Activated CD4-positive, alpha-beta T cell treated with anti-CD3 and anti-CD28 coated beads, Interleukin-2, amount 10 ng/mL, durations not matched to agents 24 days and 14 days (primary cell): ENCODE measurements at regions of chr14 and their contacts with region 1.

Region 1: DNA sequence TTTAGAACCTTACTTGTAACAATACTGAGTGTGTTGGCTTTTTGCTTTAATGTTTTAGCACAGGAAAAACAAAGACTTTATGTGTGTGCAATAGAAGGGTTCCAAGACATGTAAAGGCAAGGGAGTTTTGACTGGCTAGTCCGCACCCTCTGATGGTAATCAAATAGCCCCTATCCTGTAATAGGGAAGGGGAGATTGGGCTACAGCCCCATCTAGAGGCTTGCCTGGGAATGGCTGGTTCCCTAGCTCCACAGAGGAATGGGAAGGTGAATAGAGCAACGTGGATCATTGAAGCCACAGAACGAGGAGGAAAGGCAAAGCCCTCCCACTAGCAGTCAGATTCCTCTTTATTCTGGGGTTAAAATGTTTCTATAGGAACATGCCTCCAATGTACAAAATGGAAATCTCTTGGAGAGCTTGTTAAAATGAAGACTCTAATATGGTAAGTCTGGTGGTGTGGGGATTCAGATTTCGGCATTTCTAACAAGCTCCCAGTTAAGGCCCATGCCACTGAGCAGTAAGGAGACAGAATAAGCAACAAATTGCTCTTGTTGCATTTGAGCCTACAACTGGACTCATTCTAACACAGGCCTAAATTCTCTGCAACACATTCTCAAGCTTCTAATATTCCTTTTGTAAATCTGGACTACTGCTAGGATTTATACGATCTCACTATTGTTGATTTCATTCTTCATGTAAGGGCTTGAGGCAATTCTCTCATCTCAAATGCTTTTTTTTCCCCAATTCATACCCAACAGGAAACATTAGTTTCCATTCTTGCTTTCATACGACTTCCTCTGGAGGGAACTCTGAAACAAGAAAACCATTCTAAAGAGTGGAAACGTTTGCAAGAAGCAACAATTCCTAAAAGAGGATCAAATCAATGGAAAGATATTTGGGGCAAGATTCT is 57.1 kb downstream of the NIN start:
- DNase-seq: peak; percentile 77
- H3K4me3 Mint-ChIP-seq: no peak overlapping the region
- H3K27ac Mint-ChIP-seq: peak overlapping the region; percentile 2
- H3K4me1 Mint-ChIP-seq: peaks cover 18% of the 10 kb centered on the region
- H3K27me3 Mint-ChIP-seq: no peaks in the 10 kb centered on the region

Region 2: DNA sequence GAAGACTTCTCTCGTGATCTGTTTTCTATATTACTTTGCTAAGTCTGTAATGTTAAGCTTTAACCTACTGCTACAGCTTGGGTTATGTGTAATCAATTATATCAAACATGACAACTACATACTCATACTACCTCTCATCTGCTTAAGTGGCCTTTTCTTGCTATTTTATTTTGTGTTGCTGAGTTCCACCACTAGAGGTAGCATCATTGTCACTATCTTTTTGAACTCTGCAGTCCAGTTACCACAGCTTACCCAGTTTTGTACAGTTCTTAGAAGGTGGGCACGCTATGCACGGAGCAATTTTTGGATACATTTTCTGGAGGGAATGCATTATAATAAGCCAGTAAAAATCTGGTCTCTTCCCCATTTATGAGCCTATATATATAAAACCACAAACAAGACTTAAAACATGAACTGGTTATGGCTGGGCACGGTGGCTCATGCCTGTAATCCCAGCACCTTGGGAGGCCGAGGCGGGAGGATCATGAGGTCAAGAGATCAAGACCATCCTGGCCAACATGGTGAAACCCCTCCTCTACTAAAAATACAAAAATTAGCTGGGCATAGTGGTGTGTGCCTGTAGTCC is 154.2 kb before region 1 on chr14:
- intact Hi-C with region 1: loop called (anchors 1 kb)
- DNase-seq: peak; percentile 63
- H3K4me3 Mint-ChIP-seq: no peak overlapping the region
- H3K27ac Mint-ChIP-seq: no peak overlapping the region
- H3K4me1 Mint-ChIP-seq: no peaks in the 10 kb centered on the region
- H3K27me3 Mint-ChIP-seq: peaks cover 2% of the 10 kb centered on the region